A673 (cell line): ENCODE measurements at regions of chr6 and their contacts with region 1.

Region 1: DNA sequence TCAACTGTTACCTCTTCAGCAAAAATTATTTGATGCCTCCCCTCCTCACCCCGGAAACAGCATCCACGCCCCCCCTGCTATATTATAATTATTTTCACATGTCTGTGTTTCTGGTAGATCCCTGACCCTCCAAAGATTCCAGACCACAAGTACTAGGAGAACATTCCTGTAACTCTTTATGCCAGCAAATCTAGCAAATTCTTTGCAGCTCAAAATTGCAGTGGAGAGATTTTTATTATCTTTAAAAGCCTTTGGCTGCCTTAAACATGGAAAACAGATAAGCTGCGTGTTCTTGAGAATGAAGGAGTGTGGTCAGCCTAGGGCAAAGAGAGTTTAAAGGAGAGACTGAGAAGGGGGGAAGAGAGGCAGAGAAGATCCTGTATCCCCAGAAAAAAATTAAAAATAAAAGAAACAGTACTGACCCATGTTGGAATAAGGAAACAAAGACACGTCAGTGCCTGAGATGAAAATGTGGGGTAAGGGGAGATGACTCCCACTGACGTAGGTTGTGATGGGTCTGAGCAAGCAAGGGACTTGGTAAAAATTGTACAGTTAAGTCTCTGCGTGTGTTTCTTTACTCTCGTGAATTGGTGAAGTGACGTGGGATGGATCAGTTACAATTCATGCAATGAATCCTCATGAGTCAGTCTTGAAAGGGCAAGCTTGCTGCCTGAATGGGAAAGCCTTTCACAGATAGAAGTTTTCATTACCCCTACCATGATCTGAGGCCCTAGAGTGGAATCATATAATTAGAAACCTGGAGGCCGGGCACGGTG is 8.3 kb downstream of the ID4 start:
- DNase-seq: no peak
- H3K4me3 ChIP-seq: no peak overlapping the region
- H3K27ac ChIP-seq: no peak overlapping the region
- H3K4me1 ChIP-seq: peaks cover 25% of the 10 kb centered on the region
- H3K27me3 ChIP-seq: no peaks in the 10 kb centered on the region
- CTCF ChIP-seq: no peak

Region 2: DNA sequence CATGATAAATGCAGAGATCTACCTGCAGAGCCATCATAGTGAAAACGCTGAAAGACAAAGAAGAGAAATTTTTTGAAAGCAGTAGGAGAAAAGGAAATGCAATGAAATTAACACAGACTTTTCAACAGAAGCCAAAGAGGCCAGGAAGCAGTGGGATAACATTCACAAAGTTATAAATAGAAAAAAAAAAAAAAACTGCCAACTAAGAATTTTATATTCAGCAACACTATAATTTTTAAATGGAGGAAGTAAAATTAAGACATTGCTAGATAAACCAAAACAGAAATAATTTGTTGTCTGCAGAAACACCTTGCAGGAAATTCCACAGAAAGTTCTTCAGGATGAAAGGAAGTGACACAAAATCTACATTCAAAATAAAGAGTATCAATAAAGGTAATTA is 599.8 kb before region 1 on chr6:
- CTCF ChIA-PET with region 1: no interaction called
- POLR2A ChIA-PET with region 1: no interaction called
- intact Hi-C with region 1: no loop called
- DNase-seq: no peak
- H3K4me3 ChIP-seq: no peak overlapping the region
- H3K27ac ChIP-seq: no peak overlapping the region
- H3K4me1 ChIP-seq: no peaks in the 10 kb centered on the region
- H3K27me3 ChIP-seq: no peaks in the 10 kb centered on the region
- CTCF ChIP-seq: no peak

Region 3: DNA sequence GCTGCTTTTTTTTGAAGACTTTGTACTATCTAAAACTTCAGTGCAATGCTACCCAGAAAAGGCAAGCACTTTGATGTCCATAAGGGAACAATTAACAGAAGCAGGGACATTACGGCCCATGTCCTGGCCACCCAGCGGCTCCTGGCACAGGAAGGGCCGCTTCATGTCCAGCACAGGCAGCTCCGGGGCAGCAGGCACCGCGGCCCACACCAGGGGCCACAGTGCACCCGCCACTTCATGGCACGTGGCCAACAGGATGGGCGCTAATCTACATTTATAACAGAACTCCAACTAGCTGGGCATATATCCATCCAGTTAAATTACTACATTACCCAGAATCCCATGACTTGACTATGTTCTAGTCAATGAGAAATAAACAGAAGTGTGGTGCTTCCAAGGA is 206.5 kb before region 1 on chr6:
- CTCF ChIA-PET with region 1: no interaction called
- POLR2A ChIA-PET with region 1: no interaction called
- intact Hi-C with region 1: loop called (anchors 10 kb)
- DNase-seq: no peak
- H3K4me3 ChIP-seq: no peak overlapping the region
- H3K27ac ChIP-seq: no peak overlapping the region
- H3K4me1 ChIP-seq: peaks cover 34% of the 10 kb centered on the region
- H3K27me3 ChIP-seq: no peaks in the 10 kb centered on the region
- CTCF ChIP-seq: no peak